Colonic mucosa (tissue), 4 donors: ENCODE measurements at regions of chr21 and their contacts with region 1.

Region 1: DNA sequence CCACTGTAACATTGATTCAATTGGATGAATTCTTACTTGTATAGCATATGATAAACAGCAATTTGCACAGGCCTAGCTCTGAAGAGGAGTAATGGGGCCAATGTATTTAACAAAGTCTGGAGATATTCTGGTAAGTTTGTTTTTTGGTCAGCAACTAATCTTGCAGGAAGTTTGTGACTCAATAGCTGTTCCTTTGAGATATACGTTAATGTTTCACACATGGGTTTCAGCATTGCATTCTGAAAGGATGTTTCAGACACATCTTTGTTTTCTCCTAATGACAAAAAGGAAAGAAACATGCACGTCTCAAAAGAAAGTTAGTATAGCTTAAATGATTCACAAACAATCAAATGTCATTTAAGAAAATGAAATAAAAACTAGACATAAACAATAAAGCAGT is 49.0 kb downstream of the LTN1 start:
- DNase-seq: no peak
- H3K4me3 ChIP-seq: no peak overlapping the region
- H3K27ac ChIP-seq: no peak overlapping the region
- H3K4me1 ChIP-seq: no peaks in the 10 kb centered on the region
- H3K27me3 ChIP-seq: no peaks in the 10 kb centered on the region
- CTCF ChIP-seq: no peak

Region 2: GRCh38 chr21:28627691-28628090 is 315.9 kb before region 1 on chr21:
- intact Hi-C with region 1: no loop called
- DNase-seq: no peak
- H3K4me3 ChIP-seq: no peak overlapping the region
- H3K27ac ChIP-seq: no peak overlapping the region
- H3K4me1 ChIP-seq: no peaks in the 10 kb centered on the region
- H3K27me3 ChIP-seq: no peaks in the 10 kb centered on the region
- CTCF ChIP-seq: no peak

Region 3: DNA sequence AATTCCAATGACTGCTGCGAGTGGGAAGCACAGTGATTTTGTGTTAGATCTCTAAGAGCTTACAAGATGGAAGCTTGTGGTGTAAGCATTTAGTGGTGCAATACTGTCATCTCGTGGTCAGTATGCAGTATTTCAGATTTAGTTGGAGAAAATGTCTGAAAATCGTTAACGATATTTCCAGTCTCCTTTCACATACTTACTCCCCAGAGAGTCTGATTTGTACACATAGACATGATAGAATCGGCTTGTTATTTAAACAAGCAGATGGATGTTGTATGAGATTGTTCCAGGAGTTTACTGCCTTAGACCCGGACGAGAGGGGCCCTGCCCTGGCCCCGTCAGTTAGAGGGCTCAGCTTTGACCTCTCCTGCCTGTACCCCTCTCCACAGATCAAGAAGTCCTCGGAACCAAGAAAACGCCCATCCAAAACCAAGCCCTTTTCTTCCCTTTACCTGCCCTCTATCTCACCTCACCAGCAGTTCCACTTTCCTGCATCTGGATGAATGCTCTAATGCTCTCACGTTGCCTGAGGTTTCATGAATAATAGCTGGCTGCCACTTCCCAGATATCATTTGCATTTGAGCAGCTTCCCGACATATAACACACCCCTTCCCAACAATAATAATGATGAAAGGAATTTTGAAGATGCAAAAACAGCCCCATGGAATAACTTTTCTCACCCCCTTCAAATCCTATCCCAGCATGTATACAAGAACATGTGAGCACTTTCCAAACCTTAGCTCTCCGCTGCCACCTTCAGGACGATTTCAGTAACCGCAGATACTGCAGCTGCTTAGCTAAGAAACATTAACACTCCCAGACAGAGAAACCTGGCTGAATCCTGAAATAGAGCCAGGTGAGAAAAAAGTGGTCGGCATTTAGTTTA is 198.3 kb before region 1 on chr21:
- intact Hi-C with region 1: loop called (anchors 10 kb)
- DNase-seq: peak; percentile 79
- H3K4me3 ChIP-seq: peak overlapping the region; percentile 47
- H3K27ac ChIP-seq: peak overlapping the region; percentile 47
- H3K4me1 ChIP-seq: no peaks in the 10 kb centered on the region
- H3K27me3 ChIP-seq: no peaks in the 10 kb centered on the region
- CTCF ChIP-seq: peak; percentile 81

Region 4: DNA sequence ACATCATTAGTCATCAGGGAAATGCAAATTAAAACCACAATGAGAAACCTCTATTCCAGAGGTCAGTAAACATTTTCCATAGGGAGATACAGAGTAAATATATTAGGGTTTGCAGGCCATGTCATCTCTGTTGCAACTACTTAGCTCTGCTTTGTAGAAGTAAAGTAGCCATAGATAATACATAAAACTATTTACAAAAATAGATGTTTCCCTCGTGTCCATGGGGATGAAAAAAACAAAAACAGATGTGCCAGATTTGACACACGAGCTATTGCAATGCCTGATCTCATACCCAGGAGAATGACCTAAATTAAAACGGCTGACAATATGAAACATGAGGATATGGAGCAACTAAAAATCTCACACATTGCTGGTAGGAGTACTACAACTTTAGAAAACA is 31.8 kb after region 1 on chr21:
- intact Hi-C with region 1: no loop called
- DNase-seq: no peak
- H3K4me3 ChIP-seq: no peak overlapping the region
- H3K27ac ChIP-seq: no peak overlapping the region
- H3K4me1 ChIP-seq: no peaks in the 10 kb centered on the region
- H3K27me3 ChIP-seq: no peaks in the 10 kb centered on the region
- CTCF ChIP-seq: no peak

Region 5: GRCh38 chr21:29018540-29018939 is 74.9 kb after region 1 on chr21:
- intact Hi-C with region 1: no loop called
- DNase-seq: no peak
- H3K4me3 ChIP-seq: peak overlapping the region; percentile 87
- H3K27ac ChIP-seq: peak overlapping the region; percentile 72
- H3K4me1 ChIP-seq: no peaks in the 10 kb centered on the region
- H3K27me3 ChIP-seq: no peaks in the 10 kb centered on the region
- CTCF ChIP-seq: no peak